ENCODE measurements at regions of chr2 and their contacts with region 1.

Region 1: GRCh38 chr2:143264851-143265250 is 135.6 kb downstream of the ARHGAP15 start:
- DNase-seq: no peak
- H3K4me3 ChIP-seq: no peak overlapping the region
- H3K27ac ChIP-seq: no peak overlapping the region
- H3K4me1 ChIP-seq: peaks cover 13% of the 10 kb centered on the region
- CTCF ChIP-seq: no peak

Region 2: GRCh38 chr2:143083636-143084035 is 181.2 kb before region 1 on chr2:
- CTCF ChIA-PET with region 1: no interaction called
- POLR2A ChIA-PET with region 1: no interaction called
- intact Hi-C with region 1: no loop called
- DNase-seq: no peak
- H3K4me3 ChIP-seq: no peak overlapping the region
- H3K27ac ChIP-seq: no peak overlapping the region
- H3K4me1 ChIP-seq: no peaks in the 10 kb centered on the region
- CTCF ChIP-seq: no peak

Region 3: GRCh38 chr2:143217512-143218115 is 47.2 kb before region 1 on chr2:
- CTCF ChIA-PET with region 1: no interaction called
- POLR2A ChIA-PET with region 1: no interaction called
- intact Hi-C with region 1: no loop called
- DNase-seq: no peak
- H3K4me3 ChIP-seq: no peak overlapping the region
- H3K27ac ChIP-seq: no peak overlapping the region
- H3K4me1 ChIP-seq: no peaks in the 10 kb centered on the region
- CTCF ChIP-seq: no peak

Region 4: DNA sequence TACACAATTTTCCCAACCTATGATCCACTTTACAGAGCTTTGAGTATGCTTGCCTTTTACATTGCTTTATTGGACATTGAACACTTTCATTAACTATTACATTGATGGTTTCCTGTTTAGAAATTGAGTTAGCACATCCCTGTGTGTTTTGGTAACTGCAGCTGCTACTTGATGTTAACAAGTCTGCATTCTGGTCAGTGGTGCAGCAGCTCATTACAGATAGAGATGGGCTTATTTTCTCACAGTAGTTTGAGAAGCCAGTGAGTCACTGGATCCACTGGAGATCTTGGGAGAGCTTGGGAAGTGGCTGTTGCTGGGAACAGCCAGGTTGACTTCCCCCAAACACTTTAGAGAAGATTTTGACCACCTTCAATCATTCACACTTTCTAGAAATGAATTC is 14.8 kb after region 1 on chr2:
- CTCF ChIA-PET with region 1: no interaction called
- POLR2A ChIA-PET with region 1: interaction called, 12 read pairs
- intact Hi-C with region 1: no loop called
- DNase-seq: no peak
- H3K4me3 ChIP-seq: no peak overlapping the region
- H3K27ac ChIP-seq: no peak overlapping the region
- H3K4me1 ChIP-seq: no peaks in the 10 kb centered on the region
- CTCF ChIP-seq: no peak

Region 5: GRCh38 chr2:143371616-143372015 is 106.8 kb after region 1 on chr2:
- CTCF ChIA-PET with region 1: no interaction called
- POLR2A ChIA-PET with region 1: no interaction called
- intact Hi-C with region 1: no loop called
- DNase-seq: no peak
- H3K4me3 ChIP-seq: no peak overlapping the region
- H3K27ac ChIP-seq: no peak overlapping the region
- H3K4me1 ChIP-seq: no peaks in the 10 kb centered on the region
- CTCF ChIP-seq: no peak

Measured in OCI-LY7 (cell line).